ENCODE measurements at regions of chr14 and their contacts with region 1.

Region 1: GRCh38 chr14:53946404-53947096 is 10.1 kb downstream of the BMP4 start:
- DNase-seq: no peak
- ATAC-seq: no peak
- H3K4me3 ChIP-seq: no peak overlapping the region
- H3K27ac ChIP-seq: no peak overlapping the region
- H3K4me1 ChIP-seq: no peaks in the 10 kb centered on the region
- H3K27me3 ChIP-seq: peaks cover 4% of the 10 kb centered on the region
- CTCF ChIP-seq: no peak

Region 2: DNA sequence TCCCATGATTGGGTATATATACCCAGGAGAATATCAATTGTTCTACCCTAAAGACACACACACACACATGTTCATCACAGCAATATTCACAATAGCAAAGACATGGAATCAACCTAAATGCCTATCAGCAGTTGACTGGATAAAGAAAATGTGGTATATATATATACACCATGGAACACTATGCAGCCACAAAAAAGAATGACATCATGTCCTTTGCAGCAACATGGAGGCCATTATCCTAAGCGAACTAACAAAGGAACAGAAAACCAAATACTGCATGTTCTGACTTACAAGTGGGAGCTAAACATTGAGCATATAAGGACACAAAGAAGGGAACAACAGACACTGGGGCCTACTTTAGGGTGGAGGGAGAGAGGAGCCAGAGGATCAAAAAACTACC is 74.3 kb after region 1 on chr14:
- CTCF ChIA-PET with region 1: no interaction called
- POLR2A ChIA-PET with region 1: no interaction called
- in situ Hi-C with region 1: no loop called
- intact Hi-C with region 1: no loop called
- DNase-seq: no peak
- ATAC-seq: no peak
- H3K4me3 ChIP-seq: no peak overlapping the region
- H3K27ac ChIP-seq: no peak overlapping the region
- H3K4me1 ChIP-seq: no peaks in the 10 kb centered on the region
- H3K27me3 ChIP-seq: no peaks in the 10 kb centered on the region
- CTCF ChIP-seq: no peak

Region 3: DNA sequence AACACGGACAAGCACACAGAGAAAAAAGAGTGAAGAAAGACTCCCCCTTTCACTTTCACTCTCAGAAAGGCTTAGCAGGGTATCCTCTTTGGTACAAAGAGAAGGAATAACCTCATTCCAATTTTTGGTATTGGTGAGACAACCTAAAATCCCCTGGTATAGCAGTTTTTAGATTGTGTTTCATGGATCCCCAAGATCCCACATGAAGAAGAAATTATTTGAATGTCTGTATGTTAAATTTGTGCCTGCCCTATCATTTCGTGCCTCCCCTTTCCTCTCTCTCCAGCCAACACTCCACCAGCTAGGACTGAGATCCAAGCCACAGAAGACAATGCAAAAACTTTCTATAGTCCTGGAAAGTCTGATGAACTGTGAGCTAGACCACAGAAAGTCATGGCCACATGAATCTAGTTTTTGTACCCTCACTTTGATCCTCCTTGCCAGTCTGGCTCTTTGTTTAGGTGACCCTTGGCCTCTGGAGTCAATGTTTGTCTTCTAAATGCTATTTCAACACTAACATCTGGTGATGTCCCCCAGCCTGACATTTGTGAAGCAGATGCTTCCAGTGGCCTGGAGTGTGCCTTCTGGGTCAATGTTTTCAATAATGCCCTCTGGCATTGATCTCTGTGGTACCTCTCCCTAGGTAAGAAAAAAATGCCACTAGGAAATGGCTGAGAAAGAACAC is 191.9 kb after region 1 on chr14:
- CTCF ChIA-PET with region 1: no interaction called
- POLR2A ChIA-PET with region 1: interaction called, 11 read pairs
- in situ Hi-C with region 1: no loop called
- intact Hi-C with region 1: no loop called
- DNase-seq: no peak
- ATAC-seq: no peak
- H3K4me3 ChIP-seq: no peak overlapping the region
- H3K27ac ChIP-seq: no peak overlapping the region
- H3K4me1 ChIP-seq: no peaks in the 10 kb centered on the region
- H3K27me3 ChIP-seq: no peaks in the 10 kb centered on the region
- CTCF ChIP-seq: no peak